ENCODE measurements at regions of chr5 and their contacts with region 1.

Region 1: GRCh38 chr5:80407735-80408482 is at the start of gene ZFYVE16:
- DNase-seq: peak; percentile 95
- H3K4me3 Mint-ChIP-seq: peak within 1 kb of the TSS; percentile 96
- H3K27ac Mint-ChIP-seq: peak within 1 kb of the TSS; percentile 100
- H3K4me1 Mint-ChIP-seq: peaks cover 25% of the 10 kb centered on the region
- H3K27me3 Mint-ChIP-seq: peaks cover 6% of the 10 kb centered on the region
- total RNA-seq, gene ZFYVE16: 9.4 and 10.3 TPM in 2 replicates

Region 2: DNA sequence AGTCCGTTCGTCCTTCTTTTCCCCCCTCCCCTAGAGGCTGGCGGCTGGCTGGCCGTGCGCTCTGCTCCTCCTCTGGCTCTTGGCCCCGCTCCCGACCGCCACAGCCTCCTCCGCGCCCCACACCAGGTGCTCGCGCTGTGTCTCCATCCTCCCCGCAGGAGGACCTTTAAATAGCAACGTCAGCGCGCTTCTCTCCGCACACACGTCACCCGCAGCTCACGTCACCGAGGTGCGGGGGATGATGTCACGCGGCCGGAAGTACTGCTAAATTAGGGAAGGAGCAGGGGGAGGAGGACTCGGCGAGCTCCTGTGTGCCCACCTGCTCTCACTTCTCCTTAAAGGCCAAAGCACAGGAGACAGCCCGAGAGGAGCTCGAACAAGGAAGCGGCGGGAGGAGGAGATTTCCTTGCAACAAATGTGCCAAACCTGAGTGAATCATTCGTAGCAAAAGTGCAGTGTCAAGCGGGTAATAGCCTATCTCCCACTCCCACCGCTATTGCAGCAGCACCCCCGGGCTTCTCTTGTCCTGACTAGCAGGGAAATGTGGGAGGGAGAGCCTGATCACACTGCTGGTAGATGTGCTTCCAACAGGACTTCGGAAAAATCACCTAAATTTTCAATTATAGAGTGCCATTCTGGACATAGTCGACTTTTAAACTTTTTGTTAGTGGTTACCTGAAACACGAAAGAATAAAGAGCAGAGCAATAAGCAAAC is 893.4 kb before region 1 on chr5:
- intact Hi-C with region 1: loop called (anchors 1 kb)
- DNase-seq: peak; percentile 88
- H3K4me3 Mint-ChIP-seq: peak overlapping the region; percentile 99
- H3K27ac Mint-ChIP-seq: peak overlapping the region; percentile 100
- H3K4me1 Mint-ChIP-seq: peaks cover 43% of the 10 kb centered on the region
- H3K27me3 Mint-ChIP-seq: peaks cover 26% of the 10 kb centered on the region

Region 3: GRCh38 chr5:80093796-80094195 is 314.1 kb before region 1 on chr5:
- intact Hi-C with region 1: loop called (anchors 5 kb)
- DNase-seq: no peak
- H3K4me3 Mint-ChIP-seq: no peak overlapping the region
- H3K27ac Mint-ChIP-seq: no peak overlapping the region
- H3K4me1 Mint-ChIP-seq: peaks cover 15% of the 10 kb centered on the region
- H3K27me3 Mint-ChIP-seq: no peaks in the 10 kb centered on the region

Region 4: GRCh38 chr5:80481019-80481893 is 73.3 kb after region 1 on chr5:
- intact Hi-C with region 1: loop called (anchors 5 kb)
- DNase-seq: peak; percentile 11
- H3K4me3 Mint-ChIP-seq: no peak overlapping the region
- H3K27ac Mint-ChIP-seq: no peak overlapping the region
- H3K4me1 Mint-ChIP-seq: peaks cover 6% of the 10 kb centered on the region
- H3K27me3 Mint-ChIP-seq: peaks cover 2% of the 10 kb centered on the region

Region 5: DNA sequence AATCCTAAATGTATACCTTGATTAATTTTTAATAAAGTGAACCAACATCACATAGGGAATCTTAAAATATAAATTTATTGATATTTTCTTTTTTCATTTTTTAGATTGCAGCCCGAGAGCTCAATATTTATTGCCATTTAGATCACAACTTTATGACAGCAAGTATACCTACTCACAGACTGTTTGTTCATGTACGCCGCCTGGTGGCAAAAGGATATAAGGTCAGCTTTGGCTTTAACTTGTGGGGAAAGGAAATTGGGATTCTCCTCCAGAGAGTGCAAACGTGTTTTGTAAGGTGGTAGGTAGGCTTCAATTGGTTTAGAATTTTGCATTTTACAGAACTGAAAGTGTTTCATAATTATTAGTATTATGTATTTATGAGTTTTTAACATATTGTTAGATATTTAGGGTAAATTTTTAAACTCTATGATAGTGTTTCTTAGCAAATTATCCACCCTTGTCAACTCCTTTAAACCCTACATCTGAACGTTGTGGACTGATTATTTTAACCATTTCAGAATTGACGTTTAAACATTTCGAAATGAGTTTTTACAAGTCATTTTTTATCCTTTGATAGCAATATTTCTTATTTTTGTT is 264.3 kb after region 1 on chr5:
- intact Hi-C with region 1: loop called (anchors 5 kb)
- DNase-seq: peak; percentile 49
- H3K4me3 Mint-ChIP-seq: no peak overlapping the region
- H3K27ac Mint-ChIP-seq: no peak overlapping the region
- H3K4me1 Mint-ChIP-seq: no peaks in the 10 kb centered on the region
- H3K27me3 Mint-ChIP-seq: no peaks in the 10 kb centered on the region